Activated CD4-positive, alpha-beta T cell treated with anti-CD3 and anti-CD28 coated beads, Interleukin-2, amount 10 ng/mL, durations not matched to agents 7 days and 5 days (primary cell): ENCODE measurements at regions of chr6 and their contacts with region 1.

Region 1: GRCh38 chr6:53707108-53707897 is 41.7 kb upstream of the KLHL31 start:
- DNase-seq: no peak
- H3K4me3 Mint-ChIP-seq: no peak overlapping the region
- H3K27ac Mint-ChIP-seq: no peak overlapping the region
- H3K4me1 Mint-ChIP-seq: no peaks in the 10 kb centered on the region
- H3K27me3 Mint-ChIP-seq: peaks cover 8% of the 10 kb centered on the region

Region 2: DNA sequence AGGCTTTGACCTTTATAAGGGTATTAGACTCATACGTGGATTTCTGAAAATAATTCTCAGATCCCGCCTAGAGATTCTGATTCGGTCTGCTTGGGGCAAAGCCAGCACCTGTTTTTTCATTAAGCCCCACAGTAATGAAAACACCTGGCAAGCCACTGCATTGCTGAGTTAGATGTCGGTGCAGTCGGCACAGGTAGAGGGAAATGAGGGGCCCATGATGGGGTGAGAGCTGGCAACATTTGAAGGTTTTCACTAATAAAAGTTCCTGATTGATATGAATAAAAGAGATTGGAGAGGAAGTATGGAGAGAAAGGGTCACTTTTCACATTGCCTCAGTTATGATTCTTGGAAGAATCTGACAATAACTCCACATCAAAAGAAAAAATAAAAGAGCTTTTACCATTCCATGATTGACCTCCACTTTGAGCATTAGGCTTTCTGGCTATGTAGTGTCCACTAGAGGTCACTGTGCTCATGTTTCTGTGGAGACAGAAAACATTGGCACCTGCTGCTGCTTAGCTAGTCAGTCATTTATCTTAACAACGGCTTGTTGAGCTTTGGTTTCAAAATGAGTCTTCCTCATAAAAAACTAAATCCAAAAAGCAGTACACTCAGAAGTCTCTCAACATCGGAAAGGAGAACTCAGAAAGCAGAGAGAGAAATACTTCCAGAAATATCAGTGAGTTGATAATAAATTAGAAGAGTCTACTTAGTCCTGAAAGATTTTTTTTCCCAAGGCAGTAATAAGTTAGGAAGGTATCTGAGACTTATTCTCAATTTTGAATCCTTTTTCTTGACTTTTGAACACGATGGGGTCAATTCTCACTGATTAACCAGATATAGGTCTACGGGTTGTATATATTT is 11.5 kb after region 1 on chr6:
- CTCF ChIA-PET with region 1: interaction called, 10 read pairs
- POLR2A ChIA-PET with region 1: no interaction called
- DNase-seq: peak; percentile 56
- H3K4me3 Mint-ChIP-seq: no peak overlapping the region
- H3K27ac Mint-ChIP-seq: no peak overlapping the region
- H3K4me1 Mint-ChIP-seq: peaks cover 6% of the 10 kb centered on the region
- H3K27me3 Mint-ChIP-seq: peaks cover 22% of the 10 kb centered on the region

Region 3: GRCh38 chr6:53725791-53726431 is 18.6 kb after region 1 on chr6:
- CTCF ChIA-PET with region 1: interaction called, 14 read pairs
- POLR2A ChIA-PET with region 1: no interaction called
- DNase-seq: peak; percentile 71
- H3K4me3 Mint-ChIP-seq: no peak overlapping the region
- H3K27ac Mint-ChIP-seq: no peak overlapping the region
- H3K4me1 Mint-ChIP-seq: peaks cover 7% of the 10 kb centered on the region
- H3K27me3 Mint-ChIP-seq: peaks cover 12% of the 10 kb centered on the region